ENCODE measurements at regions of chr6 and their contacts with region 1.

Region 1: DNA sequence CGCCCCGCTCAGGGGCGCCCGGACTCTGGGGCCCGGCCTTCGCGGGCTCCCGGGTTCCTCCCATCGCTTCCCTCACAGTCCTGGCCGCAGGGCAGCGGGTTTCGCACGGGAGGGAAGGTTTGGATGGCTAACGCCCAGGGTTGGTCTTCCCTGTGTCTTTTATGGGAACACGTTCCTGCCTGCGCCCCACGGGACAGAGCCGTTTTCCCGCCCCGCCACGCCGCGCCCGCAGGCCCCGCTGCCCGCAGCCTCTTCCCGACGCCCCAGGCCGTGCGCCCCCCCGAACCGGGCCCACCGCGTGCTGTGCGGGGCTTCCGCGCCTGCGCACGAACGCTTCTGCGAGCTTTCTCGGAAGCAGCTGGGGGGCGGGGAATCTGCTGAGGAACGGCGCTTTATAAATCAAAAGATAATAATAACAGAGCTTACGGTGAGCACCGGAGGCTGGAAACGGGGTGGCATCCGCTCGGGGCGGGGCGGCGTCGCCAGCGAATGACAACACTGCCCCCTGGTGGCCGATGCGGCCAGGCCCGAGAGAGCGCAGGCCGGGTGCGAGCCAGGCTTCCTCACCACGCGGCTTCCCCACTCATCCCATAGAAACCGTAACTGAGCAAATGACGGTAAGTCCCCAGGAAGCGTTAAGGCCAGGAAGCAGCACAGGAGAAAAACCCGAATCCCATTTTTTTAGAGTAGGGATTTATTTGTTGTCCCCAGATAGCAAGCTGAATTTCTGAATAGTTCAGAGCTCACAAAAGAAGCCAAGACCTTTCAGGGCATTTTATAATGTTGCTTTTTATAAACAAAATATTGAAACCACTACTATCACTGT is 116.4 kb downstream of the MYLK4 start:
- DNase-seq: peak; percentile 88
- H3K4me3 ChIP-seq: peak overlapping the region; percentile 46
- H3K27ac ChIP-seq: no peak overlapping the region
- H3K4me1 ChIP-seq: no peaks in the 10 kb centered on the region
- H3K27me3 ChIP-seq: no peaks in the 10 kb centered on the region
- CTCF ChIP-seq: peak; percentile 99

Region 2: GRCh38 chr6:2448820-2449571 is 185.4 kb before region 1 on chr6:
- intact Hi-C with region 1: loop called (anchors 10 kb)
- DNase-seq: peak; percentile 61
- H3K4me3 ChIP-seq: no peak overlapping the region
- H3K27ac ChIP-seq: no peak overlapping the region
- H3K4me1 ChIP-seq: peaks cover 10% of the 10 kb centered on the region
- H3K27me3 ChIP-seq: no peaks in the 10 kb centered on the region
- CTCF ChIP-seq: peak; percentile 49

Measured in colonic mucosa (tissue), 4 donors.